Activated B cell treated with CpG ODN at 0.5 μM for 24 hours (primary cell): ENCODE measurements at regions of chr4 and their contacts with region 1.

Region 1: DNA sequence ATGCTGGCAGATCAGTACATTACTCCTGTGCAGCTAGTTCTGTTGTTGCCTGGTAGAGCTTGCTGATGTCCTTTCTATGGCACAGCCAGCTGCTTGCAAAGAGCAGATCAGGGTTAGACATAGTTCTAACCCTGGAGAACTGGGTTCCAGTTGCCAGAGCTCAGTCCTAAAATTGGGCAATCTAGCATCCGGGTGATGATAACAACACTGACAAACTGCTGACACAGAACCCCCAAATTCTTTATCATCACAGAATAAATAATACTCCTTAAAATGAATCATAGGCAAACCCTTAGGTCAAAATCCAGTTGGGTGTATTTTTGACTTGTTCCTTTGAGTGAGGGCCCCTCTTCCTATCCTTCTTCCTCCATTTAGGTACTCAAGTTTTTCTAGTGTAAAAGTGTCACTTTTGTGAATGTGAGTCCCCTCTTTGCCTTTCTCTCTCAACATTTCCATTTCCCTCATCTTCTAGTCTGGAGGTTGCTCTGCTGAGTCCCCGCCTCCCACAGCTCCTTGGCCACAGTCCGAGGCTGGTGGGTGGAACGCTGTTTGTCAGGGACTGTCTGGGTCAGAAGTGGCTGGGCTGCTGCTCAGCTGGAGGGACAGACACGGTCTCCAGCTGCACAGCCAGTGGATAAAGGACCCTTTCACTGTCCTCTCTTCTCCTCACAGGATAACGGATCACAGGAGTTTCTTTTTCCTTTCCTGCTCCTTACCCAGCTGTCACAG is 93.6 kb upstream of the RASGEF1B start:
- DNase-seq: no peak
- ATAC-seq: no peak
- H3K4me3 Mint-ChIP-seq: peak overlapping the region; percentile 44
- H3K27ac Mint-ChIP-seq: peak overlapping the region; percentile 69
- H3K4me1 Mint-ChIP-seq: peaks cover 69% of the 10 kb centered on the region
- H3K27me3 Mint-ChIP-seq: no peaks in the 10 kb centered on the region
- CTCF ChIP-seq: no peak

Region 2: DNA sequence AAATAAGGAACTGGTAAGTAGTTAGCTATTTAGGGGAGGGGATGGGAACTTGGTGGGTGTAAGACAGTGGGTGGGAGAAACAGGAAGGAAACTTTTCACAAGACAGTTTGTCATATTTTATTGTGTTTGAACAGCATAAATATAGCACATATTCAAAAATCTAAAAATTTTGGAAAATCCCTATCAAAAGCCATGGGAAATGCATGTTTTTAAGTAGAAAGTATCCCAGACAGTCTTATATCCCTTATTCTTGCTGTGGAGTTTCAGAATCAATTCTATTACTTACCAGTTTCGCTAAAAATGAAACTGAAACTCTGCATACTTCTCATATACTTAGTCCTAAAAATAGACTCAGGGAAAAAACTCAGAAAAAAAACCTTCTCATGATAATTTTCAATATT is 71.3 kb before region 1 on chr4:
- CTCF ChIA-PET with region 1: interaction called, 7 read pairs
- POLR2A ChIA-PET with region 1: interaction called, 5 read pairs
- intact Hi-C with region 1: loop called (anchors 1 kb)
- DNase-seq: no peak
- ATAC-seq: peak; percentile 33
- H3K4me3 Mint-ChIP-seq: peak overlapping the region; percentile 57
- H3K27ac Mint-ChIP-seq: peak overlapping the region; percentile 82
- H3K4me1 Mint-ChIP-seq: peaks cover 55% of the 10 kb centered on the region
- H3K27me3 Mint-ChIP-seq: no peaks in the 10 kb centered on the region
- CTCF ChIP-seq: no peak

Region 3: GRCh38 chr4:81512757-81513501 is 52.4 kb before region 1 on chr4:
- CTCF ChIA-PET with region 1: no interaction called
- POLR2A ChIA-PET with region 1: interaction called, 7 read pairs
- intact Hi-C with region 1: loop called (anchors 1 kb)
- DNase-seq: no peak
- ATAC-seq: peak; percentile 65
- H3K4me3 Mint-ChIP-seq: peak overlapping the region; percentile 60
- H3K27ac Mint-ChIP-seq: peak overlapping the region; percentile 84
- H3K4me1 Mint-ChIP-seq: peaks cover 73% of the 10 kb centered on the region
- H3K27me3 Mint-ChIP-seq: no peaks in the 10 kb centered on the region
- CTCF ChIP-seq: no peak

Region 4: DNA sequence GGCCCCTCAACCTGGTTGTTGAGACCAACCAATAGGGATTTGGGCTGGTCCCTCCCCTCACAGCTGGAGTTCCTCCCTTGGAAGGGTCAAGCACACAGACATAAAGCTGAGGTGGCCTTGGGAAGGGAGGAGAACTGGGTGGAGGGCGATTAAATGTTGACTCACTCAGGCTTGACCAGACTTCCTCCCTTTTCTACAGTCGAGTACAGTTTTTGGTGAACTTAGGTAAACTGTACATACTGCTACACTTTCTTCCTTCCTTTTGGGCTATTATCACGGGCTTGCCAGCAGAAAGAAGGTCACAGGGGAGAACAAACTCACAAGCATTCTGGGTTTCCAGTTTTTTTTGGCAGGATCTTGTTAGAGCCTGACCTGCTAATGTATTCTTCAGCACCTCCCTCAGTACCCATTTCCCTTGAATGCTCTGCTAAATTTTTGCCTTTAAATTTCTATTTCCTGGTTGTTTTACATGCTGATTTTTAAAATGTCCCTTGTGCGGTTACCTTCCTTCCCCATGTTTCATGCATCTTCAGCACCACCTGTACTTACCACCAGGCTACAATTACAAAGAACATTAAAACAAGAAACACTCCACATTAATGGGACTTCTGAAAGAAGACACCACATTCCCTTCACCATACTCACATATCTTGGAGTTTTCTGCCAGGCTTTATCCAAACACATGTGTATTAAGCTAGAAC is 41.6 kb after region 1 on chr4:
- CTCF ChIA-PET with region 1: interaction called, 4 read pairs
- POLR2A ChIA-PET with region 1: no interaction called
- intact Hi-C with region 1: loop called (anchors 1 kb)
- DNase-seq: no peak
- ATAC-seq: peak; percentile 54
- H3K4me3 Mint-ChIP-seq: peak overlapping the region; percentile 55
- H3K27ac Mint-ChIP-seq: peak overlapping the region; percentile 86
- H3K4me1 Mint-ChIP-seq: peaks cover 58% of the 10 kb centered on the region
- H3K27me3 Mint-ChIP-seq: no peaks in the 10 kb centered on the region
- CTCF ChIP-seq: no peak

Region 5: GRCh38 chr4:81786063-81786763 is 220.9 kb after region 1 on chr4:
- CTCF ChIA-PET with region 1: no interaction called
- POLR2A ChIA-PET with region 1: no interaction called
- intact Hi-C with region 1: no loop called
- DNase-seq: no peak
- ATAC-seq: no peak
- H3K4me3 Mint-ChIP-seq: no peak overlapping the region
- H3K27ac Mint-ChIP-seq: no peak overlapping the region
- H3K4me1 Mint-ChIP-seq: peaks cover 14% of the 10 kb centered on the region
- H3K27me3 Mint-ChIP-seq: no peaks in the 10 kb centered on the region
- CTCF ChIP-seq: no peak

Region 6: GRCh38 chr4:82373816-82374625 is 808.7 kb after region 1 on chr4 and contains the start of gene HNRNPD:
- CTCF ChIA-PET with region 1: no interaction called
- POLR2A ChIA-PET with region 1: no interaction called
- intact Hi-C with region 1: loop called (anchors 5 kb)
- DNase-seq: peak; percentile 83
- ATAC-seq: peak; percentile 88
- H3K4me3 Mint-ChIP-seq: peak within 1 kb of the TSS; percentile 98
- H3K27ac Mint-ChIP-seq: peak within 1 kb of the TSS; percentile 100
- H3K4me1 Mint-ChIP-seq: peaks cover 55% of the 10 kb centered on the region
- H3K27me3 Mint-ChIP-seq: no peaks in the 10 kb centered on the region
- CTCF ChIP-seq: no peak
- total RNA-seq, gene HNRNPD: 300 and 350 TPM in 2 replicates